ENCODE measurements at regions of chr2 and their contacts with region 1.

Region 1: DNA sequence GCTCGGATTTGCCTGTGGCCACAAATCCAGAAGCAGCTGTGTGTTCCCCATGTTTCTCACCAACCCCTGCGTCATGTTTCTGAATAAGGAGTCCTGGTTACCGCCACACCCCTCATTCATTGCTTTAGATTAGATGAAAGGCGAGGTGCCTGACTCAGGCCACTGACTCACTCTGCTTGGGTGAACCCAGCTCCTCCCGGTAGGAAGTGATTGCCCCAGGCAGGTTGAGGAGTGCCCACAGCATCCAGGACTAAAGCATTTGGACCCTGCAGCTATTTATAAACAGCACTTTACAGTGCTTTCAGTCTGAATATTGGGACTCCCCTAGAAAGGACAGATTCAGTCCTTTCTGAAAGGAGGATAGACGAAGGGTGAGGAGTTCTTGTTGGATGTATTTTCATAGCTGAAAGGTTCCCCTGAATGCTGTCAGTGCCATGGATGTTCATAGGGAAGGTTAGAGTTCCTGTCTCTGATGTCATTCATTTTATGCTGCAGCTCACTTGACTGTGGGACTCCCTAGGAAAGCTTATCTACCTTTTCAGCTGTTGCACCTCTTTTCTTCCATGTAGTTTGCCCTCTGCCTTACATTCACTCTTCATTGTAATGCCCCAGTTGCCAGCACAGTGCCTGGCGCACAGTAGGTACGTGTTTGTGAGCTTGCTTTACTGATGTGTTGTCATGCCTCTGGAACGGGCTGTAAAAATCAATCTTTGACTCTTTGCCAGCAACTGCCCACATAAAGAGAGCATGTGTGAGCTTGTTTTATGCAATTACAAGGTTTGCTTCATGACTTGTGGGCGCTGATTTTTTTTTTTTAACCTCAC is 14.9 kb downstream of the ITGA6 start:
- DNase-seq: peak; percentile 100
- H3K4me3 ChIP-seq: peak overlapping the region in 1 of 3 experiments; percentile 19
- H3K27ac ChIP-seq: peak overlapping the region; percentile 99
- H3K4me1 ChIP-seq: peaks cover 79% of the 10 kb centered on the region
- H3K27me3 ChIP-seq: no peaks in the 10 kb centered on the region
- CTCF ChIP-seq: no peak

Region 2: DNA sequence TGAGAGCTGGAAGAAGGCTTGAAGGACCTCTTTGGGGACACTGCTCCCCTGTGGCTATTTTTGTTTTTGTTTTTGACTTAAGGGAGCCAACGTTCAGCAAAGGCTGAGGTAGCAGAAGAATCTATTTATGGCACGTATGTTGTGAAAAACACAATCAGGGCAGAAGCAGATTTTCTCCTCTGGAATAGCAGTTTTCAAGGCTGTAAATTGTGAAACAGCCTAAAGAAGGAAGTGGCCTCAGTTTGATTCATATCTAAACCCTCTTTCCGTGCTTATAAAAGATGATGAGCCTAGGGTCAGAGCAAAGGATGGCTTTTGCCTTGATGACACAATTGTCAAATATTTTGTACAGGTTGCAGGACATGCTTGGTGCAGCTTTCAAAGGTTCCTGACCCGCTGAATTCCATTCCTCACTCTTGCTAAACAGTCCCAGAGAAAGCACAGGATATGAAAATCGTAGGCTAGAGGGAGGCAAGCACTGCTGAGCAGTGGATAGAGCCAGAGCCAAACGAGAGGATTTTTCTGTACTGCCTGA is 233.4 kb before region 1 on chr2:
- CTCF ChIA-PET with region 1: no interaction called
- dilution Hi-C with region 1: no loop called
- in situ Hi-C with region 1: no loop called
- intact Hi-C with region 1: no loop called
- DNase-seq: peak; percentile 80
- H3K4me3 ChIP-seq: no peak overlapping the region
- H3K27ac ChIP-seq: peak overlapping the region; percentile 47
- H3K4me1 ChIP-seq: peaks cover 28% of the 10 kb centered on the region
- H3K27me3 ChIP-seq: no peaks in the 10 kb centered on the region
- CTCF ChIP-seq: peak in 1 of 2 donors; percentile 28

Region 3: DNA sequence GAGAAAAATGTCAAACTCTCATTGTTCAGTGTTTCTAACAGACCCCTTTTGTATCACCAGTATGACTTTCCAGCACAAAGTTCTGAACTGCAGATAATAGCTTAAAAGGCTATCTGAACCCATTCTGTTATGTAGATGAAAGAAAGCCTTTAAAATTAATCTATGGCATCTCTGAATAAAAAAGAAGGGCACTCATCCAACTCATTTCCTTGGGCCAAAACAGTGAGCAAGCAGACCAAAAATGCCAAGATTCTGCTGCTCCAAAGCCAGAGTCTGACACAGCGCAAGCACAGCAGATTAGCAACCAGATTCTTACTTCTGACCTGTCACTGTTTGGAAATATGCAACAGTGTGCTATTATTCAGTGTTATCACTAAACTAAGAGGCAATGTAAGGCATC is 37.5 kb before region 1 on chr2:
- CTCF ChIA-PET with region 1: interaction called, 3 read pairs
- dilution Hi-C with region 1: no loop called
- in situ Hi-C with region 1: no loop called
- intact Hi-C with region 1: loop called (anchors 1 kb)
- DNase-seq: peak; percentile 82
- H3K4me3 ChIP-seq: no peak overlapping the region
- H3K27ac ChIP-seq: peak overlapping the region; percentile 52
- H3K4me1 ChIP-seq: peaks cover 60% of the 10 kb centered on the region
- H3K27me3 ChIP-seq: no peaks in the 10 kb centered on the region
- CTCF ChIP-seq: no peak

Region 4: DNA sequence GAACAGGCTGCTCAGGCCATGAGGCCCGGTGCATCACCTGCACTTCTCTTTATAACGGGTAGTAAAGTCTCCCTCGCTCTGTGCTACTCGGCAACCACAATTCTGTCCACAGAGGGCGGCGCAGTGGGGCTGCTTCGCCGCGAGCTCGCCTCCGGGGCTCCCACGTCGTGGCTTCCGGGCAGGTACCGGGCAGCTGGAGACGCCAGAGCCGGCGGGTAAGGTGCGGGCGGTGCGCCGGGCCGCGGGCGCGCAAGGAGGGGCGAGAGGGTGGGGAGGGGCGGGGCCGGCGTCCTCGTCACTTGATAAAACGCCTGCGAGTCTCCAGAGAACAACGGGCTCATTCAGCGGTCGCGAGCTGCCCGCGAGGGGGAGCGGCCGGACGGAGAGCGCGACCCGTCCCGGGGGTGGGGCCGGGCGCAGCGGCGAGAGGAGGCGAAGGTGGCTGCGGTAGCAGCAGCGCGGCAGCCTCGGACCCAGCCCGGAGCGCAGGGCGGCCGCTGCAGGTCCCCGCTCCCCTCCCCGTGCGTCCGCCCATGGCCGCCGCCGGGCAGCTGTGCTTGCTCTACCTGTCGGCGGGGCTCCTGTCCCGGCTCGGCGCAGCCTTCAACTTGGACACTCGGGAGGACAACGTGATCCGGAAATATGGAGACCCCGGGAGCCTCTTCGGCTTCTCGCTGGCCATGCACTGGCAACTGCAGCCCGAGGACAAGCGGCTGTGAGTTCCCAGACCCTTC is 14.9 kb before region 1 on chr2 and contains the start of gene ITGA6:
- CTCF ChIA-PET with region 1: interaction called, 14 read pairs
- dilution Hi-C with region 1: no loop called
- in situ Hi-C with region 1: no loop called
- intact Hi-C with region 1: loop called (anchors 1 kb)
- DNase-seq: peak; percentile 91
- H3K4me3 ChIP-seq: peak within 1 kb of the TSS; percentile 86 to 95 (median 87)
- H3K27ac ChIP-seq: peak within 1 kb of the TSS; percentile 93
- H3K4me1 ChIP-seq: peaks cover 23% of the 10 kb centered on the region
- H3K27me3 ChIP-seq: no peaks in the 10 kb centered on the region
- CTCF ChIP-seq: peak in 1 of 2 donors; percentile 24
- total RNA-seq, gene ITGA6: 562 to 887 TPM

Region 5: GRCh38 chr2:172836386-172836821 is 394.1 kb after region 1 on chr2:
- CTCF ChIA-PET with region 1: no interaction called
- dilution Hi-C with region 1: no loop called
- in situ Hi-C with region 1: no loop called
- intact Hi-C with region 1: loop called (anchors 5 kb)
- DNase-seq: peak; percentile 96
- H3K4me3 ChIP-seq: no peak overlapping the region
- H3K27ac ChIP-seq: peak overlapping the region; percentile 74
- H3K4me1 ChIP-seq: peaks cover 19% of the 10 kb centered on the region
- H3K27me3 ChIP-seq: no peaks in the 10 kb centered on the region
- CTCF ChIP-seq: no peak

Measured in mammary epithelial cell (primary cell).